CD8-positive, alpha-beta T cell (primary cell): ENCODE measurements at regions of chr4 and their contacts with region 1.

Region 1: GRCh38 chr4:146243141-146243882 is 29.0 kb downstream of the REELD1 start:
- DNase-seq: peak in 8 of 9 experiments; percentile 24 to 66 (median 50)
- ATAC-seq: peak; percentile 74
- H3K4me3 ChIP-seq: peak overlapping the region in 1 of 2 experiments; percentile 28
- H3K4me3 Mint-ChIP-seq: peak overlapping the region; percentile 57
- H3K27ac ChIP-seq: no peak overlapping the region
- H3K27ac Mint-ChIP-seq: no peak overlapping the region
- H3K4me1 ChIP-seq: peaks cover 6% of the 10 kb centered on the region
- H3K4me1 Mint-ChIP-seq: peaks cover 18% of the 10 kb centered on the region
- H3K27me3 ChIP-seq: no peaks in the 10 kb centered on the region
- H3K27me3 Mint-ChIP-seq: peaks cover 5% of the 10 kb centered on the region
- CTCF ChIP-seq: peak; percentile 43

Region 2: DNA sequence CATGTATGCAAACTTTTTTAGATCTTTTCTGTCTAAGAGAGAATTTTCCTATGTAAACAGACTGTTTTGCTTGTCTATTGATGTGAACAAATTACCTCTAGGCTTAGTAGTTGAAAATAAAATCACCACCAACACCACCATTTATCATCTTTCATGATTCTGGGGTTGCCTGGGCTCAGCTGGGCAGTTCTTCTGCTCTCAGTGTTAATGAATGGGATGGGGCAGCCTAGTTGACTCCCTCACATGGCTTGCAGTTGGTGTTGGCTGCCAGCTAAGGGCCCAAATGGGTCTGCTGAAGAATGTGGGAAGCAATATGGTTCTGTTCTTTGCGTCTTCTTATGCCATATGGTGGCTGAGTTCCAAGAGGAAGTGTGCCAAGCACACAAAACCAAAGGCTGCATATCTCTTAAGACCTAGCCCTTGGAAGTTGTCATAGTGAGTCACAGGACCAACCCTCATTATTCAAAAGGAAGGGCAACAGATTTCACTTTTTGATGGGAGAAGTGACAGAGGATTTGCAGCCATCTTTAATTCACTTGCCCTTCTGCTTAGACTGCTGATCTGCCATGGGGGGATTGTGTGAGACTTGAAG is 11.1 kb before region 1 on chr4:
- CTCF ChIA-PET with region 1: interaction called, 10 read pairs
- POLR2A ChIA-PET with region 1: no interaction called
- intact Hi-C with region 1: no loop called
- DNase-seq: no peak
- ATAC-seq: no peak
- H3K4me3 ChIP-seq: no peak overlapping the region
- H3K4me3 Mint-ChIP-seq: no peak overlapping the region
- H3K27ac ChIP-seq: no peak overlapping the region
- H3K27ac Mint-ChIP-seq: no peak overlapping the region
- H3K4me1 ChIP-seq: no peaks in the 10 kb centered on the region
- H3K4me1 Mint-ChIP-seq: no peaks in the 10 kb centered on the region
- H3K27me3 ChIP-seq: no peaks in the 10 kb centered on the region
- H3K27me3 Mint-ChIP-seq: peaks cover 10% of the 10 kb centered on the region
- CTCF ChIP-seq: no peak